ENCODE measurements at regions of chr6 and their contacts with region 1.

Region 1: DNA sequence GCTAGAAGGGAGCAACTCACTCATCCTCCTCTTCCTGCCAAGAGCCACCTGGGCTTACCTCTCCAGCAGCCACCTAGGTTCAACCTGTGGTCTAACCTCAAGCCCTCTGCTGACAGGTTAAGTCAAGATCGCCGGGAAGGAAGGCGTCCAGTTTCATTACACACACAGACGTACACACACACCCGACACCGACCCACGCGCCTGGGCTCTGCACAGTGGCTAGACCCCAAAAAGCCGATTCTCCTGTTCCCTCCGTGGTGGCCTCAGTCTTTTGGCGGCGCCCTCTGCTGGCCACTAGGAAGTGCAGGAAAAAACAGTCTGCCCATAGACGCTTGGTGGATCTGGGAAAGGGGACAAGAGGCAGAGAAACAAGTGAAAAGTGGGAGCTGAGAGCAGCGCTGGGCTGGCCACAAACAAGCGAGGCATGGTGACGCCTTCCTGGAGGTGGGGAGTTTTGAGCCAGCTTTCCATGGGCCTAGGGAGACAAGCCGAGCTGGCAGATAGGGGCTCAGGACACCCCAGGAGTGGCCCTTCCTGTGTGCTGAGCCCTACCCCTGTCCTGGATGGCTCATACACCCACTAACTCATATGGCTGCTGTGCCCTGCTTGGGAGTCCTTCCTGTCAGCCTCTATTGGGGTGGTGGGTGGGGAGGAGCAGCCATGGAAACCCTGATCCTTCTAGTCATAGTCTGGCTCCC is 52.7 kb downstream of the MRPL14 start:
- DNase-seq: peak; percentile 67 to 73
- ATAC-seq: peak; percentile 61 to 86
- H3K4me3 ChIP-seq: no peak overlapping the region
- H3K27ac ChIP-seq: peak overlapping the region; percentile 87 to 97
- H3K4me1 ChIP-seq: peaks cover 37% of the 10 kb centered on the region
- CTCF ChIP-seq: peak; percentile 82
- EP300 ChIP-seq: no peak
- POLR2A ChIP-seq: no peak
- RAD21 ChIP-seq: peak; percentile 84 to 85

Region 2: DNA sequence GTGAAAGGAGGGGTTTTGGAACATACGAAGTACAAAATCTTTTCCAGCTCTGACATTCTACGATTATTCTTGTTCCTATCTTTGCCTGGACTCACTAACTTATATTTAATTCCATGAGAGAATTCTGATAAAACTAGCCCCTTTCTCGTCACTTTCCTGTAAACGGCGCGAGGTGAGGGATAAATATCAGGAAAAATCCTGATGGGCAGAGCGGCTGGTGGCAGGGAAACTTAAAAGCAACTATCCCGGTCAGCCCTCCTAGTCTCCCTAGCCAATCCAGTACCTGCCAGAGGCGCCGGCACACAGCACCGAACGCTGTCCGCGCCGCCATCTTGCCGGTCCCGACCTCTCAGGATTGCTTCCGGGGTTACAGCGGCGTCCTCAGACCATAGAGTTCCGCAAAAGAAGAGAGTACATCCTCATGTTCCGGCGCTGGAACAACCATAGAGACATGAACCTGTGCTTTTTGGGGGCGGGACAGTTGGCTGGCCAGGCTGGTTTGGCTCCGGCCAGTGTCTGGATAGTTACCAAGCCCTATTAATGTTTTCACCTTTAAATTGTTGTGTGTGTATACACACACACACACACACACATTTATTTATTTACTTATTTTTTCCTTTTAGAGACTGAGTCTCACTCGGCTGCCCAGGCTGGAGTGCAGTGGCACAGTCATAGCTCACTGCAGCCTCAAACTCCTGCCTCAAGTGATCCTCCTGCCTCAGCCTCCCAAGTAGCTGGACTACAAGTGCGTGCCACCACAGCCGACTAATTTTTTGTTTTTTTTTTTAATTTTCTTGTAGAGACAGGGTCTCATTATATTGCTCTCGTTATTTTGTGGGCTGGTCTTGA is 1856.8 kb before region 1 on chr6 and contains the start of gene MRPS10:
- CTCF ChIA-PET with region 1: no interaction called
- POLR2A ChIA-PET with region 1: no interaction called
- DNase-seq: peak; percentile 85 to 95
- ATAC-seq: peak; percentile 99
- H3K4me3 ChIP-seq: peak within 1 kb of the TSS; percentile 88
- H3K27ac ChIP-seq: peak within 1 kb of the TSS; percentile 92 to 97
- H3K4me1 ChIP-seq: peaks cover 34% of the 10 kb centered on the region; the same call in 2 of the 3 replicates
- CTCF ChIP-seq: no peak
- EP300 ChIP-seq: no peak
- POLR2A ChIP-seq: peak; percentile 66
- RAD21 ChIP-seq: no peak
- polyA plus RNA-seq, gene MRPS10: 41.7 and 60.7 TPM in 2 replicates

Region 3: DNA sequence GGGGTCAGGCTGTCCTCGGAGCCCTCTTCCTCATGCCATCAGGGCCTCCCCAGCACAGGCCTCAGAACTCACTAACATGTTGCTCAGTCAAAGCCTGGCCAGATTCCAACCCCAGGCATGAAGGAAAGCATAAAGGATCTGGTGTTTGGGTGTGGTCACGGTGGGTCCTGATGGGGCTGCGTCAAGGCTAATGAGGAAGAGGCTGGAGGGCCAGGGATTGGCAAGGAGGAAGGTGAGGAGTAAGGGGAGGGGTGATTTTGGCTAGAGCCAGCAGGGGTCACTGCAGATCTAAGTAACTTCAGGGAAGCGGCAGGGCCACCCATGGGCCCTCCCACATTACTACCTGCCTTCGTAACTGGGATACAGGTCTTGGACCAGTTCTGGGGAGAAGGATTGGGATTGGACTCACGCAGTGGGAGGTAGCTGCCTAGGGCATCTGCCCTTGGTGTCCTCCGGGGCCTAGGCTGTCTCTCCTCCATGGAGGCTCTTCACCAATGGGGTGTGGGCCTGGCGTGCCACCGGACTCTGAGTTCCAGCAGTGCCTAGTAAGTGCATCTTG is 350.8 kb before region 1 on chr6:
- CTCF ChIA-PET with region 1: interaction called, 18 read pairs
- POLR2A ChIA-PET with region 1: no interaction called
- DNase-seq: peak; percentile 56 to 74
- ATAC-seq: peak; percentile 88 to 97
- H3K4me3 ChIP-seq: no peak overlapping the region
- H3K27ac ChIP-seq: no peak overlapping the region
- H3K4me1 ChIP-seq: peaks cover 9% of the 10 kb centered on the region; the same call in 2 of the 3 replicates
- CTCF ChIP-seq: peak; percentile 49
- EP300 ChIP-seq: no peak
- POLR2A ChIP-seq: no peak
- RAD21 ChIP-seq: peak; percentile 66 to 80

Region 4: DNA sequence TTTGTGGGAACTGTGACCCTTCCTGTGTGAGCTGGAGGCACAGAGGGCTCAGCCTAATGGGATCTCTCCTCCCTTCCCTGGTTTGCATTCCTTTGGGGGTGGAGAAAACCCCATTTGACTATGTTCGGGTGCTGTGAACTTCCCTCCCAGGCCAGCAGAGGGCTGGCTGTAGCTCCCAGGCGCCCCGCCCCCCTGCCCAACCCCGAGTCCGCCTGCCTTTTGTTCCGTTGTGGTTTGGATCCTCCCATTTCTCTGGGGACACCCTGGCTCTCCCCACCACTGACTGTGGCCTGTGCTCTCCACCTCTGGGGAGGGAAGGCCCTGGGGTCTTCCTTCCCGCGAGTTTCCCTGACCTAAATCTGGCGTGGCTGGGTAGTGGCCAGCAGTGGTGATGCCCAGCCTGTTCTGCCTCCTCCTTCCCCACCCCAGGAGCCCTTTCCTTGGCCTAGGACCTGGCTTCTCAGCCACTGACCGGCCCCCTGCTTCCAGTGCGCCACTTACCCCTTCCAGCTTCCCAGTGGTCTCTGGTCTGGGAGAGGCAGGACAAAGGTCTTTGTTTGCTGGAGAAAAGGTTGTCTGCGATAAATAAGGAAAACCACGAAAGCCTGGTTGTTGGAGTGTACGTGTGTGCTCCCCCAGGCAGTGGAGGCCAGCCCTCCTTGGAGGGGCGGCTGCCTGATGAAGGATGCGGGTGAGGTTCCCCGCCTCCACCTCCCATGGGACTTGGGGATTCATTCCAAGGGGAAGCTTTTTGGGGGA is 299.6 kb before region 1 on chr6:
- CTCF ChIA-PET with region 1: interaction called, 235 read pairs
- POLR2A ChIA-PET with region 1: interaction called, 21 read pairs
- DNase-seq: peak; percentile 57 to 85
- ATAC-seq: peak in 1 of 2 experiments; percentile 45; a peak in 4 of 6 replicates
- H3K4me3 ChIP-seq: peak overlapping the region; percentile 59; the same call in 2 of the 3 replicates
- H3K27ac ChIP-seq: peak overlapping the region; percentile 97 to 100
- H3K4me1 ChIP-seq: peaks cover 30% of the 10 kb centered on the region
- CTCF ChIP-seq: peak; percentile 52
- EP300 ChIP-seq: no peak
- POLR2A ChIP-seq: no peak
- RAD21 ChIP-seq: peak; percentile 33 to 53; a peak in 4 of 5 replicates

Region 5: DNA sequence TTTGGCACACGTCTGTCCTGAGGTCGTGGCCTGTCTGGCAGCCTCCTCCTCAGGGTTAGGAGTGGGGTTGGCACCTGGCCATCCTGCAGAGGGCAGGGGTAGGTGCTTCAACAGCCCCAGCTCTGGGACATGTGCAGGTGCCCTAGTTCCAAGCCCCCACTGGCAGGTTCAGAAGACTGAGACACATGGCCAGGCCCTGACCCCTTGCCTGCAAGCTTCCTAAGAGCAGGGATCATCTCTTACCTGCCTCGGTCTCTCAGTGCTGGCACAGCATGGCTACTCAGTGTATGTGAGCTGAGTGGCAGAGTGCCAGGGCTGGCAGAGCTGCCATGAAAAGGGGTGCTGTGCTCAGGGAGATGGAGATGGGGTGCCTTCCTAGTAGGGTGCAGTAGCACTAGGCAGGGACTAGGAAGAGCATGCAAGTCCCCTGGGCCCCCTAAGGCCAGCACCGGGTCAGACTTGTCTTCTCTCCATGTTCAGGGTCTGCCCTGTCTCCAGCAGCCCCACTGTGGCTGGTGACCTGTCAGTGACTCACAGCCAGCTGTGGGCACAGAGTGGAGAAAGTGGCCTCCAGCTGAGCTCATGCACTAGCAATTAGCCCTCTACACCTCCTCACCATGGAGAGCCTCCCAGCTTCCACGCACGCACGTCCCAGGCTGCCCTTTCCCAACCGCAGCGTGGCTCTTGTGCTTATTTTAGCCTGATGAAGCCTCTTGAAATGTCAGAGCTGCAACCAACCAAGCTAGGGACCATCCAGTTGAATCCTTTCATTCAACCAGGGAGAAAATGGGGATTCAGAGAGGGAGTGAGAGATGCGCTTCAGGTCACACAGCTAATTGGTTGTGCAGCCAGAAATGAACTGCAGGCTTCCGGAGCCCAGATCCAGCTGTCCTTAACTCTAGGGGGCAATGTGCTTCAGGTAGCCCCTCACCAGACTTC is 63.9 kb before region 1 on chr6:
- CTCF ChIA-PET with region 1: interaction called, 39 read pairs
- POLR2A ChIA-PET with region 1: interaction called, 5 read pairs
- DNase-seq: peak in 1 of 2 experiments; percentile 41
- ATAC-seq: peak; percentile 70 to 83
- H3K4me3 ChIP-seq: no peak overlapping the region
- H3K27ac ChIP-seq: peak overlapping the region; percentile 84 to 100
- H3K4me1 ChIP-seq: peaks cover 57% of the 10 kb centered on the region
- CTCF ChIP-seq: no peak
- EP300 ChIP-seq: peak in 1 of 2 experiments; percentile 32; a peak in 2 of 5 replicates
- POLR2A ChIP-seq: no peak
- RAD21 ChIP-seq: no peak

Region 6: GRCh38 chr6:44052419-44053023 is 22.1 kb before region 1 on chr6:
- CTCF ChIA-PET with region 1: interaction called, 49 read pairs
- POLR2A ChIA-PET with region 1: no interaction called
- DNase-seq: peak in 1 of 2 experiments; percentile 56
- ATAC-seq: peak; percentile 48 to 63; a peak in 5 of 6 replicates
- H3K4me3 ChIP-seq: no peak overlapping the region
- H3K27ac ChIP-seq: peak overlapping the region; percentile 89 to 97
- H3K4me1 ChIP-seq: peaks cover 98% of the 10 kb centered on the region
- CTCF ChIP-seq: no peak
- EP300 ChIP-seq: no peak
- POLR2A ChIP-seq: no peak
- RAD21 ChIP-seq: no peak

Region 7: GRCh38 chr6:44064089-44064947 is 10.3 kb before region 1 on chr6:
- CTCF ChIA-PET with region 1: interaction called, 49 read pairs
- POLR2A ChIA-PET with region 1: interaction called, 4 read pairs
- DNase-seq: peak; percentile 69 to 86
- ATAC-seq: peak; percentile 85 to 87
- H3K4me3 ChIP-seq: no peak overlapping the region
- H3K27ac ChIP-seq: peak overlapping the region; percentile 97 to 98
- H3K4me1 ChIP-seq: peaks cover 67% of the 10 kb centered on the region
- CTCF ChIP-seq: no peak
- EP300 ChIP-seq: peak; percentile 38 to 44; a peak in 2 of 5 replicates
- POLR2A ChIP-seq: no peak
- RAD21 ChIP-seq: no peak

Measured in A549 (cell line).